SK-N-SH (cell line): ENCODE measurements at regions of chr1 and their contacts with region 1.

Region 1: GRCh38 chr1:201895913-201896807 is 7.5 kb downstream of the SHISA4 start:
- DNase-seq: peak; percentile 92
- H3K4me3 ChIP-seq: peak overlapping the region; percentile 10 to 15; a peak in 2 of 4 replicates
- H3K27ac ChIP-seq: peak overlapping the region in 1 of 2 experiments; percentile 42; a peak in 1 of 4 replicates
- H3K4me1 ChIP-seq: peaks cover 6 to 15% of the 10 kb centered on the region in 2 experiments; a peak in 2 of 4 replicates
- H3K27me3 ChIP-seq: no peaks in the 10 kb centered on the region
- CTCF ChIP-seq: peak; percentile 97
- EP300 ChIP-seq: no peak
- RAD21 ChIP-seq: peak; percentile 95

Region 2: DNA sequence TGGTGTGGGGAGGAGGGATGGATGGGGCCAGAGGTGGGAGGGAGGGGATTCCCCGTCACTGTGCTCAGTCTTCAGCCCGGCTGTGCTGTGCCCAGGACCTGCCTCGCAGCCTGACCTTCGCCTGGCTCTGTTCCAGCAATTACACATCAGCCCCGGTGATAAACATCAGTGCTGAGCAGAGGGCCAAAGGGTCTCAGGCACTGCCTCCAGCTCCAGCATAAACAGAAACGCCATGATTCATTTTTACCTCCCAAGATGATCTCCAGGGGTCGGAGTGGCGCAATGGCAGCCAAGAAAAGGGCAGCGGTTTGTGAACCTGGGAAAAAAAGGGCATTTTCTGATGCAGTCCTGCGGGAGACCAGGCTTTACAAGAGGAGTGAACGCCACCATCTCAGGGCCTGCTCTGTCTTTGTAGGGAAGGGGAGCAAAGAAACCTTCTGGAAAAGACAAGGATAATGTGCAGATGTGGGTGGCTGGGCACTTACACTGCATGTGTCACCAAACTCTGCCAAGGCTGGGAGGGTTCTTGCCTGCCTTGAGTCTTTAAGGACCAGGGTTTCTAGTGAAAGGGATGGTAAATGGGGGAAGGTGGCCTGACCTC is 20.6 kb after region 1 on chr1:
- CTCF ChIA-PET with region 1: interaction called, 28 read pairs
- POLR2A ChIA-PET with region 1: no interaction called
- DNase-seq: peak; percentile 84
- H3K4me3 ChIP-seq: no peak overlapping the region; a peak in 2 of 4 replicates
- H3K27ac ChIP-seq: peak overlapping the region; percentile 53 to 81
- H3K4me1 ChIP-seq: peaks cover 16 to 18% of the 10 kb centered on the region in 2 experiments
- H3K27me3 ChIP-seq: no peaks in the 10 kb centered on the region
- CTCF ChIP-seq: 0 out of 2 replicates have a peak, but pooled peaks have one; percentile 14
- EP300 ChIP-seq: peak; percentile 38 to 70; a peak in 3 of 4 replicates
- RAD21 ChIP-seq: no peak

Region 3: GRCh38 chr1:201955009-201955728 is 59.0 kb after region 1 on chr1 and contains the start of gene TIMM17A:
- CTCF ChIA-PET with region 1: interaction called, 88 read pairs
- POLR2A ChIA-PET with region 1: interaction called, 3 read pairs
- DNase-seq: peak; percentile 94
- H3K4me3 ChIP-seq: peak within 1 kb of the TSS; percentile 84 to 98
- H3K27ac ChIP-seq: peak within 1 kb of the TSS; percentile 81 to 94
- H3K4me1 ChIP-seq: peaks cover 0 to 3% of the 10 kb centered on the region in 2 experiments; a peak in 2 of 4 replicates
- H3K27me3 ChIP-seq: no peaks in the 10 kb centered on the region
- CTCF ChIP-seq: no peak
- EP300 ChIP-seq: no peak
- RAD21 ChIP-seq: no peak
- polyA plus RNA-seq, gene TIMM17A: 33.6 and 51.6 TPM in 2 replicates

Region 4: GRCh38 chr1:201982623-201983379 is 86.6 kb after region 1 on chr1 and contains the start of gene RNPEP:
- CTCF ChIA-PET with region 1: interaction called, 344 read pairs
- POLR2A ChIA-PET with region 1: interaction called, 5 read pairs
- DNase-seq: peak; percentile 82
- H3K4me3 ChIP-seq: peak within 1 kb of the TSS; percentile 67 to 69
- H3K27ac ChIP-seq: peak within 1 kb of the TSS; percentile 66 to 78
- H3K4me1 ChIP-seq: peaks cover 0 to 8% of the 10 kb centered on the region in 2 experiments; a peak in 2 of 4 replicates
- H3K27me3 ChIP-seq: no peaks in the 10 kb centered on the region
- CTCF ChIP-seq: peak; percentile 22; the same call in 1 of the 2 replicates
- EP300 ChIP-seq: no peak
- RAD21 ChIP-seq: no peak
- polyA plus RNA-seq, gene RNPEP: 36.7 and 46.7 TPM in 2 replicates

Region 5: GRCh38 chr1:202112839-202113672 is 216.9 kb after region 1 on chr1:
- CTCF ChIA-PET with region 1: interaction called, 13 read pairs
- POLR2A ChIA-PET with region 1: no interaction called
- DNase-seq: no peak
- H3K4me3 ChIP-seq: no peak overlapping the region
- H3K27ac ChIP-seq: peak overlapping the region in 1 of 2 experiments; percentile 1; a peak in 1 of 4 replicates
- H3K4me1 ChIP-seq: peaks cover 6 to 12% of the 10 kb centered on the region in 2 experiments; a peak in 2 of 4 replicates
- H3K27me3 ChIP-seq: no peaks in the 10 kb centered on the region
- CTCF ChIP-seq: no peak
- EP300 ChIP-seq: no peak
- RAD21 ChIP-seq: no peak